ENCODE measurements at regions of chr10 and their contacts with region 1.

Region 1: GRCh38 chr10:31808258-31809218 is 120.1 kb downstream of the ARHGAP12 start:
- DNase-seq: peak; percentile 29
- H3K4me3 Mint-ChIP-seq: peak overlapping the region; percentile 48
- H3K27ac Mint-ChIP-seq: peak overlapping the region; percentile 63
- H3K4me1 Mint-ChIP-seq: peaks cover 6% of the 10 kb centered on the region
- H3K27me3 Mint-ChIP-seq: no peaks in the 10 kb centered on the region

Region 2: DNA sequence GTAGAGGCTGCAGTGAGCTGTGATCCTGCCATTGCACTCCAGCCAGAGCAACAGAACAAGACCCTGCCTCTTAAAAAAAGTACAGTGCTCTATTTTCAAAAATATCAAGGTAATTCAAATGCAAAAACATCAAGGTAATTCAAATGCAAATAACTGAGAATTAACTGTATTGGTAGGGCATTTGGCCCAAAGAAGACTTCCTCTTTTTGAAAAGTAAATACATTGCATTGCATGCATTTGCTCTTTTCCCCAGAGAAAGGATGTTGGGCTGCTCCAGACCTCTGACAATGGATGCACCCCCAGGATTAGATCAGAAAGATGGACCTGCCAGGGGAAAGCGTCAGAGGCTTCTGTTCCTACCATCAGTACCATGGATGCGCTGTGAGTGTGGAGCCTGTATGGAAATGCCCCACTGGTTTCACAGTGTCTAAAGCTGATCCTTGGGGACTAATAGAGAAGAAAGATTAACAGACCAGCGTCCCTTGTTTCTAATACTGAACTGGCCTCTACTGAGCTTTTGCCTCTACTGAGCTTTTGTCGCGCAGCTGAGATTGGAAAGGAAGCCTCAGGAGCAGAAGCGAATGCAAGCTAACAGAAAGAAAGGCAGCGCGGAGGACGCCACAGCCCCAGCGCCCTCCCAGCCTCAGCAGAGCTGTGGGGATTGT is 1085.5 kb before region 1 on chr10:
- CTCF ChIA-PET with region 1: no interaction called
- POLR2A ChIA-PET with region 1: no interaction called
- intact Hi-C with region 1: loop called (anchors 2 kb)
- DNase-seq: no peak
- H3K4me3 Mint-ChIP-seq: no peak overlapping the region
- H3K27ac Mint-ChIP-seq: no peak overlapping the region
- H3K4me1 Mint-ChIP-seq: peaks cover 7% of the 10 kb centered on the region
- H3K27me3 Mint-ChIP-seq: no peaks in the 10 kb centered on the region

Region 3: DNA sequence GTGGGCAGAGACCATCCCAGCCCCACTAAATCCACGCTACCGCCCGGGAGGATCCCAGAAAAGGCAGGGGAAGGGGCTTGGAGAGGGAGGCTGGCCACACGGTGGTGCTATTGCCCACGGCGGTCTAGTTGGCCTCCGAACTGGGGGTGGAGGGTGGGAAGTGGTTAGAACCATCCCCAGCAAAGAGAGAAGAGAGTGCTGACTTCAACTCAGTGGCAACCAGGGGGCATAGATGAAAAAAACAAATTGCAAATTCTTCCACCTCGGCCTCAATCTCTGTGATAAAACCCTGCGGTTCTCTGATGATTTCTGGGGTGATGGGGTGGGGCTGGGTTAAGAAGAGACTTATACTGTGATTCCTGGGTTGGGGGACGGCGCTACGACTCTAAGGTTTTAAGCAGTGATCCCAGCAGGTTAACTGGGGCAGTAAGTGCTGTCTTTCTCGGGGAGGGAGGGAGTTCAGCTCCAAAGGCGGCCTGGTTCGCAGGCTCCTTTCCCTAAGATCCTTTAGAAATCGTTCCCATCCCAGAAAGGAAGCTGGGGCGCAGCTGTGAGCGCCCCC is 1024.5 kb before region 1 on chr10:
- CTCF ChIA-PET with region 1: interaction called, 27 read pairs
- POLR2A ChIA-PET with region 1: no interaction called
- intact Hi-C with region 1: loop called (anchors 1 kb)
- DNase-seq: peak; percentile 91
- H3K4me3 Mint-ChIP-seq: peak overlapping the region; percentile 62
- H3K27ac Mint-ChIP-seq: peak overlapping the region; percentile 45
- H3K4me1 Mint-ChIP-seq: peaks cover 18% of the 10 kb centered on the region
- H3K27me3 Mint-ChIP-seq: no peaks in the 10 kb centered on the region

Region 4: GRCh38 chr10:31515819-31516402 is 292.6 kb before region 1 on chr10:
- CTCF ChIA-PET with region 1: no interaction called
- POLR2A ChIA-PET with region 1: no interaction called
- intact Hi-C with region 1: loop called (anchors 10 kb)
- DNase-seq: no peak
- H3K4me3 Mint-ChIP-seq: no peak overlapping the region
- H3K27ac Mint-ChIP-seq: no peak overlapping the region
- H3K4me1 Mint-ChIP-seq: peaks cover 8% of the 10 kb centered on the region
- H3K27me3 Mint-ChIP-seq: no peaks in the 10 kb centered on the region

Region 5: DNA sequence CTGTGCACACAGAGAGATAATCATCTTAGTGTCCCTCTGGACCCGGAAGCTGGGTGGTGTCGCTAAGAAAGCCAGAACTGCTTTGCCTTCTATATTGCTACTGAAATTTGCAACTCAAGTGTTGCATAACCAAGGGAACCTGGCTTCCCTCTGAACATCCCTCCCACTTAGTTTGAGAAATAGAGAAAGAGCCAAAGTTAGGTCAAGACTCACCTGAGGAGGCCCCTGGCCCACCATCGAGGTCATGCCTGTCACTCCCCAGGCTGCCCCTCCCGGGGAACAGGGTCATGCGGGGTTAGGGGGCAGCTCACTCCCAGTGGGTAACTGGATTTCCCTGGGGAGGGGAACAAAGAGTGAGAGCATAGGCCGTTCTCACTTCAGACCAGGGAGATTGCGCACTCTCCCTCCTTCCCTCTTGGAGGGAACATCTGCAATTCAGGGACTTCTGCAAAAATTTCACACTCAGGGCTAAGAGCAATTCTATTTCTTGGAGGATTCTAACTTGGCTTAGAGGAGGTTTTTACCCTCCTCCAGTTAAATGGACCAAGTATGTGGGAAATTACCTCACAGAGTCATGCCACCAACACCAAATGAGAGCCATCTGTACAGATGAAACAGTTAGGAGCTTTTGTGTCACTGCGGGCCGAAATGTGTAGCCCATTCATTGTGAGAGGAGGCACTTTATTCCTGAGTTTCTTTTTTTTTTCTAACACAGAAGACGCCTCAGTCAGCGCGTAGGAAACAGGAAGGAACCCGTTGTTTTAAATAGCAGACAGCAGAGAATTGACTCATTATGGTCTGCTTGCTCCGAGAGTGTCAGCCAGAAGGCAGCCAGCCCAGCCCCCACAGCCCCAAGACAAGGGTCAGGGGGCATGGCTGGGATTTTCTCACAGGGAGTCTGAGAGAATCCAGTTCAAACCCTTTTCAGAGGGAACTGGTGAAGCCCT is 101.2 kb before region 1 on chr10:
- CTCF ChIA-PET with region 1: interaction called, 5 read pairs
- POLR2A ChIA-PET with region 1: no interaction called
- intact Hi-C with region 1: loop called (anchors 1 kb)
- DNase-seq: peak; percentile 81
- H3K4me3 Mint-ChIP-seq: peak overlapping the region; percentile 23
- H3K27ac Mint-ChIP-seq: peak overlapping the region; percentile 84
- H3K4me1 Mint-ChIP-seq: peaks cover 24% of the 10 kb centered on the region
- H3K27me3 Mint-ChIP-seq: no peaks in the 10 kb centered on the region